ENCODE measurements at regions of chr2 and their contacts with region 1.

Region 1: DNA sequence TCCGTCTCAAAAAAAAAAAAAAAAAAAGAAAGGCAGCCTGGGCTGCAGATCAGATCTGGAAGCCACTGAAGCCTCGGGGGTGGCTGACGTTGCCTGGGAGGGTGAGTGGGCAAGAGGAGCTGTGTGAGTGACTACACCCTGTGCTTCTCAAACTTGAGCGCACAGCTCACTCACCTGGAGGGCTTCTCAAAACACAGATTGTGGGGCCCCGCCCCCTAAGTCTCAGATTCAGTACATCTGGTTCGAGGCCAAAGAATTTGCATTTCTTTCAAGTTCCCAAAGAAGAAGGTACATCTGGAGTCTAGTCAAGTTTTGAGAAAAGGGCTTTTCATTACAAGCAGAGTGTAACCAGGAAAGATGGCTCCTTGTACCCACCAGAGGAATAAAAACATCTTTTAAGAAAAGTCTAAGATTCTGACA is 97.7 kb upstream of the CAB39 start:
- DNase-seq: peak; percentile 62
- H3K4me3 ChIP-seq: no peak overlapping the region
- H3K27ac ChIP-seq: peak overlapping the region; percentile 30
- H3K4me1 ChIP-seq: peaks cover 12% of the 10 kb centered on the region
- H3K27me3 ChIP-seq: no peaks in the 10 kb centered on the region
- CTCF ChIP-seq: no peak

Region 2: DNA sequence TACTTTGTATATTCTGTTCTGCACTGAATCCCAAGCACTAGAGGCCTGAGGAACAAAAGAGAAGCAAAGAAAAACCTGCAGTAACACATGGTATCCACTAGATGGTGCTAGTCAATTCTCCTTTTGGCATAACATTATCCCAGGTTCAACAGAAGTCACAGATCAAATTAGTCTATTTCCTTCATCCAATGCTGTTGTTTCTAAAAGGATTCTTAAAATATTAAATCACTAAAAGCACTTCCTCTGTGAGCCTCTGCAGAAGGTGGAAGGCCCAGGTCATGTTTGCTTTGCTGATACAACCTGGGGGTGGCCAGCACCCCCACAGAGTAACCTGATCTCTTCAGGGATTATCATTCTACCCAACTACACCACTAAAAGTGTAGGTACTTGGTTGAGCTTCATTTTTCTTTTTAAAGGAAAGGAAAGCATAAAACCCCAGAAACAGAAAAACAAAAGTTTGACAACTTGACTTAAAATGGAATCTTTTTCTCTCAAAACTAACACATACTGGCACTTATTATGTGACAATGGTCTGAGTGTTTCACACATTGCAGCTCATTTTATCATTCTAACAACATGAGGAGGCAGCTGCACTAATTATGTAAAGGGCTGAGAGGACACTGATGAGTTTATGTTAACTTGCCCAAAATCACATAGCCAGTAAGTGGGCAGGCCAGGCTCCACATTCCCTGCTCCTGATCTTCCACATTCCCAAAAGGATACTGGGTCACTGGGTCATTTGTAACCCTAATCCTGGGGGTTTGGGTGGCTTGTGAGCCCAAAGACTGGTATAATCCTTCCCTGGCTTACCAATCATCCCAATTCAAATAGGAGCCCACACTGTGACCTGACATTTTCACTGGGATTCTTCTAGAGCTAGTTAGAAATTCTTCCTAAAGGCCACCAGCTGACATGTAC is 833.8 kb before region 1 on chr2:
- CTCF ChIA-PET with region 1: no interaction called
- dilution Hi-C with region 1: no loop called
- in situ Hi-C with region 1: no loop called
- intact Hi-C with region 1: loop called (anchors 2 kb)
- DNase-seq: peak; percentile 31
- H3K4me3 ChIP-seq: no peak overlapping the region
- H3K27ac ChIP-seq: no peak overlapping the region
- H3K4me1 ChIP-seq: peaks cover 13% of the 10 kb centered on the region
- H3K27me3 ChIP-seq: no peaks in the 10 kb centered on the region
- CTCF ChIP-seq: peak; percentile 84 to 88

Region 3: GRCh38 chr2:229921892-229922445 is 693.0 kb before region 1 on chr2 and contains the start of gene TRIP12:
- CTCF ChIA-PET with region 1: no interaction called
- dilution Hi-C with region 1: no loop called
- in situ Hi-C with region 1: no loop called
- intact Hi-C with region 1: loop called (anchors 5 kb)
- DNase-seq: peak; percentile 97
- H3K4me3 ChIP-seq: peak within 1 kb of the TSS; percentile 74 to 84 (median 80)
- H3K27ac ChIP-seq: peak within 1 kb of the TSS; percentile 79
- H3K4me1 ChIP-seq: peaks cover 14% of the 10 kb centered on the region
- H3K27me3 ChIP-seq: no peaks in the 10 kb centered on the region
- CTCF ChIP-seq: no peak
- total RNA-seq, gene TRIP12: 235 to 245 TPM

Region 4: GRCh38 chr2:230068016-230068650 is 546.8 kb before region 1 on chr2:
- CTCF ChIA-PET with region 1: no interaction called
- dilution Hi-C with region 1: no loop called
- in situ Hi-C with region 1: no loop called
- intact Hi-C with region 1: loop called (anchors 1 kb)
- DNase-seq: peak; percentile 34
- H3K4me3 ChIP-seq: peak overlapping the region; percentile 38 to 50 (median 50)
- H3K27ac ChIP-seq: no peak overlapping the region
- H3K4me1 ChIP-seq: peaks cover 21% of the 10 kb centered on the region
- H3K27me3 ChIP-seq: no peaks in the 10 kb centered on the region
- CTCF ChIP-seq: peak in 1 of 2 donors; percentile 10

Region 5: DNA sequence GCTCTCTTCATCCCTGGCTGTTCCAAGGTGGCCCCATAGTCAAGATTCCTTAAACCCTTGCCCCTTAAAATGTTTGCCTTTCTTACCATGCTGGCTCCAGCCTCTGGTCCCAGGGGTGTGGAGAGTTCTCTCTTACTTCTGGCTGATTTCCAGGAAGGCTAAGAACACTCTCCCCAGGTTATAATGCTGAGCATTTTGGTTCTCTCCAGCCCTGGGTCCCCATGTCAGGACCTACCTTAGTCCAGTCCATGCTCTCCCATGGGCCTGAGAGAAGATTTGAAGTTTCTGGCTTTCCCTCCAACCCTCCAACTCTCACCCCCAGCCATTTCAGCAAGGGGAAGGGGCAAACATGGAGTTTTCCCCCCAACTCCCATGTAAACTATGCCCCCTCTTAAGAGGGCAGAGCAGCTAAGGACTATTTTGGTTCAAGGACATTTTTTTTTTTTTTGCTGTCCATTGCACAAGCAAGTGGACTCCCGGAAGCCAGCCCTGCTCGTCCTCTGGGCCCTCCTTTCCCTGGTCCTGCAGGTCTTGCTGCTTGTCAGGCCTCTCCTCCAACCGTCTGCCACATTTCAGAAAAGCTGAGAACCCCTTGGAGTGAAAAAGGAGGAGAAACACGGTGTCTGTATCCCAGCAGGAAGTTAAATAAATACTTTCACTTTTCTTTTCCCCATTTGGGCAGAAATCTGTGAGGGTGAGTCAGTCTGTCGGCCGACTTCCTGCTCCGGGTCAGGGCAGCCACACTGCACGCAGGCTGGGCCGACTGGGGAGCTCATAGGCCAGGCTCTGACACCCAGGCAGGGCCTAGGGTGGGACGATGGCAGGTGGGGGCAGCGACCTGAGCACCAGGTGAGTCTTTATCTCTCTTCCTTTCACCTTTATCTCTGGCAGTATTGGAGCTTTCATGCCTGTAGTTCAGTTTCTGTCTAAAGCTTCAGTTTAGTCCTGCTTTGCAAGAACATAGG is 288.2 kb before region 1 on chr2 and contains the start of gene SP140L:
- CTCF ChIA-PET with region 1: no interaction called
- dilution Hi-C with region 1: no loop called
- in situ Hi-C with region 1: no loop called
- intact Hi-C with region 1: loop called (anchors 10 kb)
- DNase-seq: peak; percentile 68
- H3K4me3 ChIP-seq: peak within 1 kb of the TSS; percentile 45 to 64 (median 61)
- H3K27ac ChIP-seq: peak within 1 kb of the TSS; percentile 63
- H3K4me1 ChIP-seq: peaks cover 11% of the 10 kb centered on the region
- H3K27me3 ChIP-seq: no peaks in the 10 kb centered on the region
- CTCF ChIP-seq: no peak
- total RNA-seq, gene SP140L: 2.5 to 14.7 TPM

Region 6: GRCh38 chr2:230589497-230590015 is 25.4 kb before region 1 on chr2:
- CTCF ChIA-PET with region 1: no interaction called
- dilution Hi-C with region 1: no loop called
- in situ Hi-C with region 1: no loop called
- intact Hi-C with region 1: no loop called
- DNase-seq: no peak
- H3K4me3 ChIP-seq: no peak overlapping the region
- H3K27ac ChIP-seq: no peak overlapping the region
- H3K4me1 ChIP-seq: no peaks in the 10 kb centered on the region
- H3K27me3 ChIP-seq: no peaks in the 10 kb centered on the region
- CTCF ChIP-seq: no peak

Region 7: GRCh38 chr2:230691005-230691647 is 76.2 kb after region 1 on chr2:
- CTCF ChIA-PET with region 1: no interaction called
- dilution Hi-C with region 1: no loop called
- in situ Hi-C with region 1: no loop called
- intact Hi-C with region 1: loop called (anchors 5 kb)
- DNase-seq: peak; percentile 98
- H3K4me3 ChIP-seq: no peak overlapping the region
- H3K27ac ChIP-seq: peak overlapping the region; percentile 73
- H3K4me1 ChIP-seq: peaks cover 56% of the 10 kb centered on the region
- H3K27me3 ChIP-seq: no peaks in the 10 kb centered on the region
- CTCF ChIP-seq: no peak

Region 8: GRCh38 chr2:230793572-230794359 is 178.8 kb after region 1 on chr2:
- CTCF ChIA-PET with region 1: no interaction called
- dilution Hi-C with region 1: no loop called
- in situ Hi-C with region 1: no loop called
- intact Hi-C with region 1: loop called (anchors 1 kb)
- DNase-seq: peak; percentile 97
- H3K4me3 ChIP-seq: peak overlapping the region in 1 of 3 experiments; percentile 9
- H3K27ac ChIP-seq: peak overlapping the region; percentile 93
- H3K4me1 ChIP-seq: peaks cover 54% of the 10 kb centered on the region
- H3K27me3 ChIP-seq: no peaks in the 10 kb centered on the region
- CTCF ChIP-seq: no peak